ENCODE measurements at regions of chr1 and their contacts with region 1.

Region 1: GRCh38 chr1:186559601-186560116 is 98.7 kb upstream of the PDC start:
- DNase-seq: no peak
- ATAC-seq: no peak
- H3K4me3 ChIP-seq: no peak overlapping the region
- H3K27ac ChIP-seq: no peak overlapping the region
- H3K4me1 ChIP-seq: no peaks in the 10 kb centered on the region
- H3K27me3 ChIP-seq: no peaks in the 10 kb centered on the region
- CTCF ChIP-seq: no peak

Region 2: GRCh38 chr1:186605762-186606350 is 46.2 kb after region 1 on chr1:
- intact Hi-C with region 1: no loop called
- DNase-seq: peak in 1 of 2 donors; percentile 27
- ATAC-seq: peak in 5 of 8 donors; percentile 48 to 83 (median 70)
- H3K4me3 ChIP-seq: no peak overlapping the region
- H3K27ac ChIP-seq: no peak overlapping the region
- H3K4me1 ChIP-seq: no peaks in the 10 kb centered on the region
- H3K27me3 ChIP-seq: no peaks in the 10 kb centered on the region
- CTCF ChIP-seq: peak; percentile 36 to 73 (median 67)

Region 3: DNA sequence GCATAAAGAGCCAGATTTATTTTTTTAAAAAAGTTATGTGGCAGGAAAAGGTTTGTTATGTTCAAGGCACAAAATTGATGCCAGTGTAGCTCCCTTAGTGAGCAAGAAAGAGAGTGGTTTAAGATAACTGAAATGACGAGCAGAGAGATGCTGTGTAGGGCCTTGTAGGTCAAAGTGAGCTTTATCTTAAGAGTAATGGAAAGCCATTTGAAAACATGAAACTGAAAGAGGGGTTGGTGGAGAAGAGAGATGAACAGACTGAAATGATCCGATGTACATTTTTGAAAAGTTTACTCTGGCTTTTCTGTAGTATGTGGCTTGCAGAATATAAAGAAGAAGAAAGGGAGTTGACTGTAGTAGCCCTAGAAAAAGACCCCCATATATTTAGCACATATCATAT is 652.7 kb after region 1 on chr1:
- intact Hi-C with region 1: loop called in 1 of 10 experiments (anchors 5 kb)
- DNase-seq: no peak
- ATAC-seq: no peak
- H3K4me3 ChIP-seq: no peak overlapping the region
- H3K27ac ChIP-seq: no peak overlapping the region
- H3K4me1 ChIP-seq: no peaks in the 10 kb centered on the region
- H3K27me3 ChIP-seq: no peaks in the 10 kb centered on the region
- CTCF ChIP-seq: no peak